Esophagus muscularis mucosa (tissue), 4 donors: ENCODE measurements at regions of chr2 and their contacts with region 1.

Region 1: DNA sequence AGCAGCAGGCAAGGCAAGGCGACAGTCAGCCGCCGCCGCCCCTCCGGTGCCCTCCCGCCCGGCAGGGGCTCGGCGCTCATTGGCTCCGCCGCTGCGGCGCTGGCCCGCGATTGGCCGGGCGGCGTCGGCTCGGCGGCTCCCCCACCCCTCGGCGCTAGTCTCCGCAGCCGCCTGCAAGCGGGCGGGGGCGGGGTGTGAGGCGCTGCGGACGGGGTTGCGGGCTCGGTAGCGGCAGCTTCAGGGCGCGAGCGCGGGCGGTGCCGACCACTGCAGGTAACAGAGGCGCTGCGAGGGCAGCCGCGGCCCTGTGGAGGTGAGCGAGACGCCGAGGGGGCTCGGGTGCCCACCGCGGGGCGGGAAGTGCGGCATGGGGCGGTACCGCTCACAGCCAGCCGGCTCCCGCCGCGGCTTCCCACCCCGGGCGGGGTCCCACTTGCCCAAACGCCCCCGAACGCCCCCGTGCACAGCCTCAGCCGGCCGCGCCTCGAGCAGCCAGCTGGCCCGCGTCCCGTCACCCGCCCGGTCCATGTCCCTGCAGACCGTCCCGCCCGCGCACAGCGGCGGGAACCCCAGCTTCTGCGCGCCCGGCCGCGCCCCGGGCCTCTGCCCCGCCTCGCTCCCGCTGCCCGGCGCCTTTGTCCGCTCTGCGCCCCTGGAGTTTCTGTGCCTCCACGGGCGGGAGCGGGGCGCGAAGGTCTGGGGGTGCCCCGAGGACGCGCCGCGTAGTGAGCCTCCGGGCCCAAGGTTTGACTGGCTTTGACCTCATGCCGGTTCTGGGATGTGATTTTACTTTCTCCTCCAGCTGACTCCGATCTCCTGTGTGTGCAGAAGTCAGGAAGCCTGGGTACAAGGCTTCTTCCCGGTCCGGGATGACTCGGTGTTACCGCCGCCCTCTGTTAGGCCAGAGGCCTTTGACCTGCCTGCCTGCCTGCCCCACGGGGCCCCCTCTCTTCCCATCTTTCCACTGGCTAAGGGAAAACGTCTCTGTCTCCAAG is at the start of gene SANBR:
- DNase-seq: peak; percentile 93
- H3K4me3 ChIP-seq: peak within 1 kb of the TSS; percentile 81 to 100 (median 92)
- H3K27ac ChIP-seq: peak within 1 kb of the TSS; percentile 80 to 89 (median 84)
- H3K4me1 ChIP-seq: peaks cover 0 to 21% (median 13%) of the 10 kb centered on the region in 4 donors
- H3K27me3 ChIP-seq: no peaks in the 10 kb centered on the region
- CTCF ChIP-seq: no peak
- EP300 ChIP-seq: no peak
- POLR2A ChIP-seq: no peak
- total RNA-seq, gene SANBR: 5.0 to 7.5 (median 6.3) TPM

Region 2: DNA sequence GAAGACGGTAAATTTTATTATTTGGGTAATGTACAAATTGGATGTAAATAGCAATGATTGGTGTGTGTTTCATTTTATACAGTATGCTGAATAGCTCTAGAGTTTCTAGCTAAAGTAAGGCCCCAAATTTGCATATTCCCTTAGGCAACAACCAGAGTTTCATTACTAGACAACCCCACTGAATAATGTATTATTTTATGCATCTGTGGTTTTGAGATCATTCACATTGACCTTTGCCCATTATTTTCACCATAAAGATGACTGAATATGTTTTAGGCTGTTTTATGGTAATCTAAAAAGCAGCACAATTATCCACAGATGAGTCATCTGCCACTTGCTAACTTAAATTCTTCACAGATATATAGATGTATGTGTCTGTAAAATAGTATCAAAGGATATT is 51.5 kb after region 1 on chr2:
- intact Hi-C with region 1: no loop called
- DNase-seq: no peak
- H3K4me3 ChIP-seq: no peak overlapping the region
- H3K27ac ChIP-seq: no peak overlapping the region
- H3K4me1 ChIP-seq: no peaks in the 10 kb centered on the region
- H3K27me3 ChIP-seq: no peaks in the 10 kb centered on the region
- CTCF ChIP-seq: no peak
- EP300 ChIP-seq: no peak
- POLR2A ChIP-seq: no peak

Region 3: DNA sequence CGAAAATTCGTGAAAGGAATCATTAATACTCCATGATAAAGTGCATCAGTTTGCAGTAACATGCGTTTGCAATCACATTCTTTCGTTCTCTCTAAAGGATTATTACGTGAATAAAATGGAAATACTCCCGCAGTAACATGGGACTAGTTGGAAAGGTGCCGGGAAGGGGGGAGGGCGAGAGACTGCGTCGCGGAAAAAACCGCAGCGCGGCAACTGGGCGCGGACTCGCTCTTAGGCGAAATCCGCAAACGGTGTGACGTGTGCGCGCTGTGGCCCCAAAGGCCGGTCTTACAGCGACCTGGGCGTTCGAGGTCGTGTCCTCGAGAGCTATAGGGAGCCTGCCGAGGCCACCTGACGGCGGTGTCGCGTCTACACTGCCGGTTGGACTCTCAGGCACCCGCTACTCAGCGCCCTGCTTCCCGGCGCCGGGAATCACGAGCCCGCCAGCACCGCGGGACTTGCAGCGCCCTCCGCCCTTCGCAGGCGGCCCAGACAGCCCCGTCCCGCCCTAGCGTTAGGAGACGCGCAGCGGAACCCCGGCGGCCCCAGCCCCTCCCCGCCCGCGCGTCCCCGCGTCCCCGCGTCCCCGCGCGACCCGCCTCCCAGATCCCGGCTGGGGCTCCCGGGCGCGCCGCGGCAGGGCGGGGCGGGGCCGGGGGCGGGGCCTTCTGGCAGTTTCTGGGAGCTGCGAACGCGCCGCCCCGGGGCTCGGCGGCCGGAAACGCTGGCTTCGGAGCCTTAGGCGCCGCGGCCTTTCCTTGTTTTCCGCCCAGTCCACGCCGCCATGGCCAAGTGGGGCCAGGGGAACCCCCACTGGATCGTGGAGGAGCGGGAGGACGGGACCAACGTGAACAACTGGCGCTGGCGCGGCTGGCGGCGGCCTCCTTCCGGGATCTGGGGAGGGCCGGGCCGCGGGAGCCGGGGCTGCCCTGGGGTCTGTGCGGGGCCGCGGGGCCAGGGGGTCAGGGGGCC is 111.0 kb after region 1 on chr2:
- intact Hi-C with region 1: loop called (anchors 10 kb)
- DNase-seq: peak; percentile 96
- H3K4me3 ChIP-seq: peak overlapping the region; percentile 85 to 96 (median 92)
- H3K27ac ChIP-seq: peak overlapping the region; percentile 98 to 99 (median 99)
- H3K4me1 ChIP-seq: peaks cover 44 to 49% (median 48%) of the 10 kb centered on the region in 4 donors
- H3K27me3 ChIP-seq: no peaks in the 10 kb centered on the region
- CTCF ChIP-seq: peak in 1 of 3 experiments; percentile 23
- EP300 ChIP-seq: no peak
- POLR2A ChIP-seq: peak; percentile 70

Region 4: GRCh38 chr2:61220768-61221167 is 154.8 kb after region 1 on chr2:
- intact Hi-C with region 1: no loop called
- DNase-seq: no peak
- H3K4me3 ChIP-seq: no peak overlapping the region
- H3K27ac ChIP-seq: no peak overlapping the region
- H3K4me1 ChIP-seq: no peaks in the 10 kb centered on the region
- H3K27me3 ChIP-seq: no peaks in the 10 kb centered on the region
- CTCF ChIP-seq: no peak
- EP300 ChIP-seq: no peak
- POLR2A ChIP-seq: no peak